ENCODE measurements at regions of chr22 and their contacts with region 1.

Region 1: DNA sequence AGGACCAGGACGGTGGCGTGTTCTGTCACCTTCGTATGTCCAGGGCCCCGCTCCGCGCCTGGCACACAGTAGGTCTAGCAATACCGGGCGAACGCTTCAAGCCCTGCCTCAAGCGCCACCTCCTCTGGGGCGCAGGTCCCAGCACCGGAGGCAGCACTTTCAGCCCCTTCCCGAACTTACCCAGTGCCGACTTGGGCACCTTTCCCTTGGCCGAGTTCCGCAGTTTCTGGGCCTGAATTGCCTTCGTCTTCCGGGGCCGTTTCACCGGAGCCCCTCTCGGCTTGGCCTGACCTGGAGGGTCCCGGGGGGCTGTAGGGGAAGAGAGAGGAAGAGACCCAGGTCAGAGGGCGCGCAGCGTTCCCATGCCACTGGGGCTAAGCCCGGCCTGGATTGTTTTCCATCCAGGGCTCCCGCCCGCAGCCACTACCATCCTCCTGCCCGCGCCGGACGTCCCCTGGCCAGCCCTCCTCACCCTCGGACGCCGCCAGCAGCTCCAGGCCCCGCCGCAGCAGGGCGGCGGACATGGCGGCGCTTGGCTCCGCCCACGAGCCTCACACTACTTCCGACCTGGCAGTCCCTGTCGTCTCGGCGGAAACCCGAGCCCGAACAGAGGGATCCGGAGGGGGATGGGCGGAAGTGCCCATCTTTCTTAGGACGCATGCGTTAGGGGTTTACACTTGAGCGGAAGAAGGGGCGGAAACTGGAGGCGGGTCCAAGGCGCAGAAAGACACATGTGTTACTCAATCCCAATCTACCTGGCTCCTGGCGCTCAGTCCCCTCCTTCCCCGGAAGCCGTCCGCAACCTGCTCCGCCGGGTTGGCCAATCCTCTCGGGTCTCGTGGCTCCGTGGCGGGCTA is at the start of gene RPS19BP1:
- DNase-seq: peak; percentile 100
- ATAC-seq: peak; percentile 90
- H3K4me3 Mint-ChIP-seq: peak within 1 kb of the TSS; percentile 86
- H3K27ac Mint-ChIP-seq: peak within 1 kb of the TSS; percentile 93
- H3K4me1 Mint-ChIP-seq: peaks cover 49% of the 10 kb centered on the region
- H3K27me3 Mint-ChIP-seq: no peaks in the 10 kb centered on the region
- CTCF ChIP-seq: no peak
- total RNA-seq, gene RPS19BP1: 68.5 to 71.7 TPM

Region 2: GRCh38 chr22:39343259-39344048 is 189.0 kb before region 1 on chr22:
- CTCF ChIA-PET with region 1: interaction called, 15 read pairs
- POLR2A ChIA-PET with region 1: no interaction called
- intact Hi-C with region 1: no loop called
- DNase-seq: peak; percentile 69
- ATAC-seq: peak; percentile 77
- H3K4me3 Mint-ChIP-seq: no peak overlapping the region
- H3K27ac Mint-ChIP-seq: no peak overlapping the region
- H3K4me1 Mint-ChIP-seq: peaks cover 4% of the 10 kb centered on the region
- H3K27me3 Mint-ChIP-seq: peaks cover 8% of the 10 kb centered on the region
- CTCF ChIP-seq: peak; percentile 72

Region 3: DNA sequence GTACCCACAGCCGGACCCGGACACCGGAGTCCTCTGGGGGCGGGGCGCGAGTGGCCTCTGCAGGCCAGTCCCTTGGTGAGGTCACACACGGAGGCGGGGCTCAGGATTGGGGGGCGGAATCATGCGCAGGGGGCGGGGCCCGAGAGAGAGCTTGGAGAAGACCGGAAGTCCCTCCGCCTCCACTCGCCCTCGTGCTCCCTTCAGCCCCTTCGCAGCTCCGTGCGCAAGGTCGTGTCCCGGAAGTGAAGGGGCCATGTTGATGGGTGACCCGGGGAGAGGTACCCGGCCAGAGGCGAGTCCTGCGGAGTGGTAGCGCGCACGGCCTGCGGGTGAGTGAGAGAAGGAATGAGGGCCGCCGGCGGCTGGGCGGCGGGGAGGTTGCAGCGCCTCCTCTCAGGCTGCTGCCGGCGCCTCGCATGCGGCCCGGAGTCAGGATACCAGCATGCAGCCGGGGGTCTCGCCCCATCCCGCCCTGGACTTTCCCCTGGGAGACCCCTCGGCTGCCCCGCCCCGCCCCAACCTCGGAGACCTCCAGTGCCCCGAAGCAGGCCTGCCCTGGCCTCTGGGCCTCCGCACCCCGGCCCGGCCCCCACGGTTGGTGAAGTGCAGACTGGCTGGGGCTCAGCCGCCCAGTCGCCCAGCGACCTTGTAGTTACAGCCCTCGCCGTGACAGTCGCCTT is 30.2 kb before region 1 on chr22 and contains the start of gene MIEF1:
- CTCF ChIA-PET with region 1: interaction called, 323 read pairs
- POLR2A ChIA-PET with region 1: interaction called, 234 read pairs
- intact Hi-C with region 1: loop called (anchors 5 kb)
- DNase-seq: peak; percentile 98
- ATAC-seq: peak; percentile 99
- H3K4me3 Mint-ChIP-seq: peak within 1 kb of the TSS; percentile 80
- H3K27ac Mint-ChIP-seq: peak within 1 kb of the TSS; percentile 93
- H3K4me1 Mint-ChIP-seq: peaks cover 32% of the 10 kb centered on the region
- H3K27me3 Mint-ChIP-seq: no peaks in the 10 kb centered on the region
- CTCF ChIP-seq: no peak
- total RNA-seq, gene MIEF1: 48.2 to 51.1 TPM

Region 4: GRCh38 chr22:39520054-39520891 is 12.2 kb before region 1 on chr22 and contains the start of gene ATF4:
- CTCF ChIA-PET with region 1: interaction called, 40 read pairs
- POLR2A ChIA-PET with region 1: interaction called, 234 read pairs
- intact Hi-C with region 1: no loop called
- DNase-seq: peak; percentile 99
- ATAC-seq: peak; percentile 89
- H3K4me3 Mint-ChIP-seq: peak within 1 kb of the TSS; percentile 89
- H3K27ac Mint-ChIP-seq: peak within 1 kb of the TSS; percentile 98
- H3K4me1 Mint-ChIP-seq: peaks cover 57% of the 10 kb centered on the region
- H3K27me3 Mint-ChIP-seq: no peaks in the 10 kb centered on the region
- CTCF ChIP-seq: no peak
- total RNA-seq, gene ATF4: 518 to 536 TPM

Region 5: GRCh38 chr22:39559454-39560105 is 27.1 kb after region 1 on chr22:
- CTCF ChIA-PET with region 1: interaction called, 18 read pairs
- POLR2A ChIA-PET with region 1: no interaction called
- intact Hi-C with region 1: no loop called
- DNase-seq: peak; percentile 30
- ATAC-seq: peak; percentile 26
- H3K4me3 Mint-ChIP-seq: no peak overlapping the region
- H3K27ac Mint-ChIP-seq: no peak overlapping the region
- H3K4me1 Mint-ChIP-seq: peaks cover 2% of the 10 kb centered on the region
- H3K27me3 Mint-ChIP-seq: peaks cover 26% of the 10 kb centered on the region
- CTCF ChIP-seq: peak; percentile 57

Region 6: GRCh38 chr22:39927544-39927943 is 395.1 kb after region 1 on chr22:
- CTCF ChIA-PET with region 1: interaction called, 24 read pairs
- POLR2A ChIA-PET with region 1: no interaction called
- intact Hi-C with region 1: no loop called
- DNase-seq: peak; percentile 73
- ATAC-seq: peak; percentile 45
- H3K4me3 Mint-ChIP-seq: no peak overlapping the region
- H3K27ac Mint-ChIP-seq: no peak overlapping the region
- H3K4me1 Mint-ChIP-seq: peaks cover 30% of the 10 kb centered on the region
- H3K27me3 Mint-ChIP-seq: no peaks in the 10 kb centered on the region
- CTCF ChIP-seq: peak; percentile 67

Region 7: DNA sequence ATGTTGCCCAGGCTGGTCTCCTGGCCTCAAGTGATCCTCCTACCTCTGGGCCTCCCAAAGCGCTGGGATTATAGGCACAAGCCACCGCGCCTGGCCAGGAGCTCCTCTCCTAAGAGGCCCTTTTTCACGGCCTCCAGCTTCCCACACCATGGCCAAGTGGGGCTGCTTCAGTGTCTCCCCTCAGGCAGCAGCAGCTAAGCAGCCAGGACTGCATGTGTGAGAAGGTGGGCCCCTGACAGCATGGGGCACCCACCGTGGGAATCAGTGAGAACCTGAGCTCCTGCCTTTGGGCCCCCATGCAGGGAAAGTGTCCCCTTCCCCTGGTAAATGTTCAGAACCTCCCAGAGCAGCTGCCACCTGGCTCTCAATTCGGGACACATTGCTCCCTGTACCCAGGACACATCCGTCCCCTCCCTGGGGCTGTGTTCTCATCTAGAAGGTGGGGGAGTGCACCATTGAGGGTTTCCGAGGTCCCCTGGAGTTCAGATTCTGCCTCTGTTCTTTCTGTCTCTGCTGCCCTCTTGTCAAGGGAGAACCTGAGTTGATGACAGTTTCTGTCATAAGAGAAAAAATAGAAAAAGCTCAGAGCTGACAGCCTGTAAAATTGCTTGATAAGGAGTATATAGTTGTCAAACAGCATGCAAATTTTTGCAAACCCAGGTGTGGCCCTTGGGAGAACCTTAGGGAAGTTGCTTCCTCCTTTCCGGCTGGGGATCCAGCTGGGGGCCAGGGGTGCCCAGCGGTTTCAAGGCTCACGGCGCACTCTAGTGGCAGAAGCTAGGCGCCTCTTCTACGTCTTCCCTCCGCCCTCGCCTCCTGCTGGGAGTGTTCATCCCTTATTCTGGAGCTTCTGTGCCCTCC is 492.0 kb after region 1 on chr22:
- CTCF ChIA-PET with region 1: interaction called, 94 read pairs
- POLR2A ChIA-PET with region 1: interaction called, 3 read pairs
- intact Hi-C with region 1: no loop called
- DNase-seq: peak; percentile 76
- ATAC-seq: peak; percentile 83
- H3K4me3 Mint-ChIP-seq: no peak overlapping the region
- H3K27ac Mint-ChIP-seq: no peak overlapping the region
- H3K4me1 Mint-ChIP-seq: peaks cover 5% of the 10 kb centered on the region
- H3K27me3 Mint-ChIP-seq: no peaks in the 10 kb centered on the region
- CTCF ChIP-seq: peak; percentile 99

Measured in activated CD8-positive, alpha-beta T cell treated with anti-CD3 and anti-CD28 coated beads for 36 hours (primary cell).